ENCODE measurements at regions of chr1 and their contacts with region 1.

Region 1: DNA sequence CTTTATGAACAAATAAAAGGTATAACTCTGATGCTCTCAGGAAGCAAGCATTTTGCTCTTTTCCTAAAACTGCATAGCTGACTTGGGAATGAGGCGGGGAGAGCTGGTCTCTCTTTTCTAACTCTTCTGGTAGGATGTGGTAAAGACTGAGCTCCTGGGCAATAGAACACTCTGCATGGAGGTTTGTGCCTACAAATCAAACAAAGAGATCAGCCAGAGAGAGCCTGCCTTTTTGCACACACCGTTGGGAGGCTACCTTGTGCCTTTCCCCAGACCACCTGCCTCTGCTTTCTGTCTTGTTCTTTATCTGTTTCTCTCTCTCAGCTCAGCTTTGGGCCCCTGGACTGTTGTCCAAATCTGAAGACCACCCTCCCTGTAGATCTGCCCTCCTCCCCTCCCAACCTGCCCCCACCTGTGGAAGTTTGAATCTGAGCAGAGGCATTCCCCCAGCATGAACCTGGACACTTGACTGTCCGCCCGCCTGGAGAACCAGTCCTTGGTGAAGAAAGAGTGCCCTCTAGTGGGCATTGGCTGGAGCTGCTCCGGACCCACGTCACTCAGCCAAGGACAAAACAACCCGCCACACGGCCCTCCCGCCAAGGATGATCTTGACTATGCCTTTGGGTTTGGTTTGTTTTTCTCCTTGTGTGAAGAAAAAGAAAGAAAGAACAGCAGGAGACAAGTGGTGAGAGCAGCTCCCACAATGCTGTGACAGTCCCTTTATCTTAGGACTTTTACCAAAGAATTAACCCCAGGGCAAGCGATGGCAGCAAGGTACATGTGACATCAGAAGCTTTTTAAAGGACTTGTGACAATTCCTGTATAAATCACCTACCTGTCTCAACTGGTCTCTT is 228.2 kb downstream of the PBX1 start:
- DNase-seq: no peak
- H3K4me3 ChIP-seq: no peak overlapping the region
- H3K27me3 ChIP-seq: no peaks in the 10 kb centered on the region
- CTCF ChIP-seq: peak; percentile 94

Region 2: DNA sequence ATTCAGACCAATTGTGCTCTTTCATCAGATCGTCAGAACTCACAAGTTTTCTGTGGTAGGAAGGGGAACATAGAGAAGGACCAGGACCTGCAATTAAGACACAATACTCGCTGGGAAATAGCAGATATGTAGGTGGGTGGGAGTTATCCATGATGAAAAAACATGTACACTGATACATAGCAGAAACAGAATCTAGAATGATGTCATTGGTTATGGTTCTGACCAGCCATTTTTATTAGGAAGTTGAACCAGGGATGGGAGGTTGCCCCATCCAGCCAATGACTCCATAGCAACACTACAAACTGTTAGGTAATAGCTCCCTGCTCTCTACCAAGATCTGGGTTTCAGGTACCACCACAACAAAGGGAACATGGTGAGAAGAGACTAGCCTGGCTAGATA is 621.7 kb before region 1 on chr1:
- CTCF ChIA-PET with region 1: interaction called, 13 read pairs
- POLR2A ChIA-PET with region 1: no interaction called
- DNase-seq: no peak
- H3K4me3 ChIP-seq: no peak overlapping the region
- H3K27me3 ChIP-seq: no peaks in the 10 kb centered on the region
- CTCF ChIP-seq: no peak

Region 3: DNA sequence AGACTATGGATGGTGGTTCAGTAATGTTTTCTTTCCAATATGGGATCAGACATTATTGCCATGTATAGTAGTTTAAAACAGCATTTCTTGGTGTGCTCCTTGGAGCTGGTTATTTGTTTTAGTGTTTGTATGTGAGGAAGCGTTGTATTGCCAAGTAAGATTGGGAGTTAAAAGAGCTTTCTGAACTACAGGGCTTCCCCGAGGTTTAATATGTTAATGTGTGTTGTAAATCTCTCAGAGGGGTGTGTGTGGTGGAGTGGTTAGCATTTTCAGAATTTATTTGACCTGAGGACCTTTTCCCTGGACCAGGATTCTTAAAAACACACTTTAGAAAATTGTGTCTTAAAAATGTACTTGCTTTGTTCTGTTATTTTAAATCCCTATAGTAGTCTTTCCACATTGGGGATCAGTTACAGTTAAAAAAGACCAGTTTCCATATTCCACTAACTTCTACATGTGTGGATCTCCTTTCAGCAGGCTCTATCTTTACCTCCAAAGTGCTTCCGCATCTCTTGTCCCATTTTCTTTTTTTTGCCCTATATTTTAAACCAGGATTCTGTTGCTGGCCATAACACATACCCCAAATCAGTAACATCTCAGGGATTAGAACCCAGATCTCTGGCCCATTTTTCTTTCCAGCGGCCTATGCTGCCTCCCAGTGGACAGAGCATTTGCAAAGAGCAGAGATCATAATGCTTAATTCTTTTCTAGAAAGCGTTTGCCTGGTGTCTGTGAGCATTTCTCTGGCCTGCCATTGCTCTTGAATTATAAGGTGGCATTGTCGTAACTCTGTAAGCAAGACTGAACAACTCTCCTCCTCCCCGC is 169.6 kb before region 1 on chr1:
- CTCF ChIA-PET with region 1: interaction called, 36 read pairs
- POLR2A ChIA-PET with region 1: no interaction called
- DNase-seq: no peak
- H3K4me3 ChIP-seq: no peak overlapping the region
- H3K27me3 ChIP-seq: no peaks in the 10 kb centered on the region
- CTCF ChIP-seq: peak; percentile 53

Region 4: GRCh38 chr1:164765557-164765956 is 21.6 kb before region 1 on chr1:
- CTCF ChIA-PET with region 1: interaction called, 19 read pairs
- POLR2A ChIA-PET with region 1: no interaction called
- DNase-seq: peak; percentile 88
- H3K4me3 ChIP-seq: no peak overlapping the region
- H3K27me3 ChIP-seq: no peaks in the 10 kb centered on the region
- CTCF ChIP-seq: no peak

Region 5: GRCh38 chr1:164772635-164773034 is 14.6 kb before region 1 on chr1:
- CTCF ChIA-PET with region 1: interaction called, 11 read pairs
- POLR2A ChIA-PET with region 1: no interaction called
- DNase-seq: peak; percentile 75
- H3K4me3 ChIP-seq: no peak overlapping the region
- H3K27me3 ChIP-seq: no peaks in the 10 kb centered on the region
- CTCF ChIP-seq: no peak

Measured in BJ (cell line).